CD4-positive, alpha-beta T cell (primary cell): ENCODE measurements at regions of chr6 and their contacts with region 1.

Region 1: DNA sequence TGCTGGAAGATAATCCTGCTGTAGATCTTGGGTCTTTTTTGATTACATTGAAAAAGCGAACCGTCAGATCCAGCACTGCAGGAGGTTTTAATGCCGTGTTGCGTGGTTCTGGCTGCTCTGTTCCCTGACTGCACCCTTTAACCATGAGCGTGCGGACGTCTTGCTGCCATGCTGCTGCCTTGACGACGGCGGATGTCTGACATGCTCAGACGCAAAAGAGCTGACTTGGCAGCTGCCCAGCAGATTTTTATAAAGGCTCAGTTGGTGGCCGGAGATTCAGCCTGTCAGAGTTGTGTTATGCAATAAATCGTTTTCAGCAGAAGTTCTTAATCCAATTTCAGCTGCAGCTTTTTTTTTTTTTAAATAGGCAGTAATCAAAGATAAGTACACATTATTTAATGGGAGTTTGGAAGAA is 119.4 kb downstream of the JARID2 start:
- DNase-seq: peak; percentile 27 to 82 (median 50)
- ATAC-seq: peak; percentile 95
- H3K4me3 ChIP-seq: no peak overlapping the region
- H3K4me3 Mint-ChIP-seq: peak overlapping the region; percentile 43
- H3K27ac ChIP-seq: no peak overlapping the region
- H3K27ac Mint-ChIP-seq: no peak overlapping the region
- H3K4me1 ChIP-seq: peaks cover 23% of the 10 kb centered on the region
- H3K4me1 Mint-ChIP-seq: no peaks in the 10 kb centered on the region
- H3K27me3 ChIP-seq: no peaks in the 10 kb centered on the region
- H3K27me3 Mint-ChIP-seq: no peaks in the 10 kb centered on the region
- CTCF ChIP-seq: no peak

Region 2: DNA sequence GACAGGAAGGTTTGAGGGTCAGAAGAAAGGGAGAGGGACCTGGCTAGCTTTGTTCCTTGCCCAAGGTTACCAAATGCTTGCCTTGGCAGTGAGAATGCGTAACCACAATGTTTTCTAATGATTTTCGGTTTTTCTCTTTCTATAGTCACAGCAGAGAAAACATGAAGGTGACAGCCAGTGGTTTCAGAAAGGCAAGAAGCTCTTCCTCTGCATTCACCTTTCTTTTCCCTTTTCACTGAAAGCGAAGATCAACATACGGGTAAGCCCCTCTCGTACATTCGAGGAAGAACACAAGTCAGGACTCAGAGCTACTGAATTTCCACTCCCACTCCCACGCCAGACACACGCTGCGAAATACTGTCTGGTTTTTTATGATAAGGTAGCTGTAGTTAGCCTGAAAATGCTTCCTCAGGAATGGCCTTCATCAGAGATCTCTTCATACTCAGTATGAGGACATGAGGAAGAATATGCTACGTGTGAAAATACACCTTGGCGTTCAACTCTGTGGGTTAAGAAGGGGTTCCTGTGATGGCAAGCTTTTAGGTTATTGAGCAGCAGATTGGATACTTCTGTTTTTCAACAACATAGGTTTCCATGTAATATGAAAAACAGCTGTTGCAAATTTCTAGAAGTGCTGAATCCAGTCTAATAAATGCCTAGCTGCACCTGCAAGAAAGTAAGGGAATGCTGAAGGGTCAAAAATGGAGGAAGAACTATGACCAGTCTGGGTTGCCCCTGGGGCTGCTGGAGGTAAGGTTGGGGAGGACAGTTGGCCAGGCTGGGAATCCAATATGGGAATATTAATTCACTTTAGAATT is 1255.1 kb before region 1 on chr6:
- CTCF ChIA-PET with region 1: no interaction called
- POLR2A ChIA-PET with region 1: no interaction called
- intact Hi-C with region 1: loop called in 1 of 2 experiments (anchors 5 kb)
- DNase-seq: peak in 1 of 14 experiments; percentile 41
- ATAC-seq: no peak
- H3K4me3 ChIP-seq: no peak overlapping the region
- H3K4me3 Mint-ChIP-seq: no peak overlapping the region
- H3K27ac ChIP-seq: no peak overlapping the region
- H3K27ac Mint-ChIP-seq: no peak overlapping the region
- H3K4me1 ChIP-seq: peaks cover 22% of the 10 kb centered on the region
- H3K4me1 Mint-ChIP-seq: peaks cover 21% of the 10 kb centered on the region
- H3K27me3 ChIP-seq: no peaks in the 10 kb centered on the region
- H3K27me3 Mint-ChIP-seq: peaks cover 6% of the 10 kb centered on the region
- CTCF ChIP-seq: no peak

Region 3: GRCh38 chr6:15346315-15346714 is 19.0 kb before region 1 on chr6:
- CTCF ChIA-PET with region 1: no interaction called
- POLR2A ChIA-PET with region 1: no interaction called
- intact Hi-C with region 1: loop called in 1 of 2 experiments (anchors 2 kb)
- DNase-seq: no peak
- ATAC-seq: peak; percentile 50
- H3K4me3 ChIP-seq: no peak overlapping the region
- H3K4me3 Mint-ChIP-seq: peak overlapping the region; percentile 43
- H3K27ac ChIP-seq: no peak overlapping the region
- H3K27ac Mint-ChIP-seq: peak overlapping the region; percentile 63
- H3K4me1 ChIP-seq: peaks cover 24% of the 10 kb centered on the region
- H3K4me1 Mint-ChIP-seq: peaks cover 88% of the 10 kb centered on the region
- H3K27me3 ChIP-seq: no peaks in the 10 kb centered on the region
- H3K27me3 Mint-ChIP-seq: no peaks in the 10 kb centered on the region
- CTCF ChIP-seq: no peak